Dorsolateral prefrontal cortex (tissue), 120 donors: ENCODE measurements at regions of chr12 and their contacts with region 1.

Region 1: DNA sequence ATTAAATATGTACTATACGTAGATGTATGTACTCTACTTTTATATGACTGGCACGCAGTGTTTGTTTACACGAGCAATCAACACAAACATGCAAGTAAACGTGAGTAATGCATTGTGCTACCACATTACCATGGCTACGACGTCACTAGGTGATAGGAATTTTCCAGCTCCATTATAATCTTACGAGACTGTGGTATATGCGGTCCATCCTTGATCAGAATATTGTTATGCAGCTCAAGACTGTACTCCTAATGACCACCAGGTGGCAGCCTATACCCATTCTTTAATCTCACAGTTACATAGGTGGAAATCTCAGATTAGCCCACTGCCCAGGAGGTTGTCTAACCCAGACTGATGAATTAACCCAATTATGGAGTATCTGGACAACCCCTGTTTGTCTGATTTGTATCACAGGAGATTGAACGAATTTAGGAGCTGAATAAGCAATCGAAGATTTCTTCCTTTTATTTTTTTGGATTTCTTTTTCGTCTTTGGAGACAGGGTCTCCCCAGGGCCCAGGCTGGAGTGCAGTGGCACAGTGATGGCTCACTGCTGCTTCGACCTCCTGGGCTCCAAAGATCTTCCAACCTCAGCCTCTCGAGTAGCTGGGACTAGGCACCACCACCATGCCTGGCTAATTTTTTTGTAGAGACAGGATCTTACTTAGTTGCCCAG is 8.7 kb upstream of the TESPA1 start:
- DNase-seq: peak in 5 of 10 donors; percentile 32 to 75 (median 43)
- H3K4me3 ChIP-seq: no peak overlapping the region
- H3K27ac ChIP-seq: peak overlapping the region in 18 of 59 donors; percentile 1 to 69 (median 24)
- H3K27me3 ChIP-seq: no peaks in the 10 kb centered on the region
- CTCF ChIP-seq: peak; percentile 85 to 99 (median 96)

Region 2: GRCh38 chr12:55142669-55143565 is 149.6 kb after region 1 on chr12:
- intact Hi-C with region 1: loop called in 1 of 2 experiments (anchors 2 kb)
- DNase-seq: peak in 4 of 10 donors; percentile 23 to 61 (median 48)
- H3K4me3 ChIP-seq: no peak overlapping the region
- H3K27ac ChIP-seq: no peak overlapping the region
- H3K27me3 ChIP-seq: no peaks in the 10 kb centered on the region
- CTCF ChIP-seq: peak; percentile 55 to 87 (median 77)